Naive thymus-derived CD4-positive, alpha-beta T cell (primary cell): ENCODE measurements at regions of chr7 and their contacts with region 1.

Region 1: GRCh38 chr7:127347567-127348246 is 44.8 kb downstream of the ZNF800 start:
- DNase-seq: peak; percentile 55 to 80 (median 73)
- ATAC-seq: peak; percentile 99
- H3K4me3 ChIP-seq: peak overlapping the region; percentile 46
- H3K4me3 Mint-ChIP-seq: peak overlapping the region; percentile 52 to 80 (median 65)
- H3K27ac ChIP-seq: no peak overlapping the region
- H3K27ac Mint-ChIP-seq: peak overlapping the region in 2 of 9 donors; percentile 48 to 68
- H3K4me1 ChIP-seq: peaks cover 3% of the 10 kb centered on the region in 2 donors
- H3K4me1 Mint-ChIP-seq: peaks cover 6 to 33% (median 22%) of the 10 kb centered on the region in 7 donors
- H3K27me3 ChIP-seq: no peaks in the 10 kb centered on the region
- H3K27me3 Mint-ChIP-seq: peaks cover 0 to 28% (median 0%) of the 10 kb centered on the region in 5 donors

Region 2: GRCh38 chr7:127253281-127254162 is 94.2 kb before region 1 on chr7:
- CTCF ChIA-PET with region 1: no interaction called
- POLR2A ChIA-PET with region 1: no interaction called
- intact Hi-C with region 1: loop called in 1 of 2 experiments (anchors 5 kb)
- DNase-seq: peak; percentile 13 to 64 (median 41)
- ATAC-seq: peak; percentile 84
- H3K4me3 ChIP-seq: peak overlapping the region; percentile 76
- H3K4me3 Mint-ChIP-seq: peak overlapping the region; percentile 76 to 93 (median 88)
- H3K27ac ChIP-seq: no peak overlapping the region
- H3K27ac Mint-ChIP-seq: no peak overlapping the region
- H3K4me1 ChIP-seq: peaks cover 12 to 16% of the 10 kb centered on the region in 2 donors
- H3K4me1 Mint-ChIP-seq: peaks cover 12 to 32% (median 25%) of the 10 kb centered on the region in 7 donors
- H3K27me3 ChIP-seq: peaks cover 3 to 27% of the 10 kb centered on the region in 2 donors
- H3K27me3 Mint-ChIP-seq: peaks cover 65 to 83% (median 73%) of the 10 kb centered on the region in 5 donors

Region 3: DNA sequence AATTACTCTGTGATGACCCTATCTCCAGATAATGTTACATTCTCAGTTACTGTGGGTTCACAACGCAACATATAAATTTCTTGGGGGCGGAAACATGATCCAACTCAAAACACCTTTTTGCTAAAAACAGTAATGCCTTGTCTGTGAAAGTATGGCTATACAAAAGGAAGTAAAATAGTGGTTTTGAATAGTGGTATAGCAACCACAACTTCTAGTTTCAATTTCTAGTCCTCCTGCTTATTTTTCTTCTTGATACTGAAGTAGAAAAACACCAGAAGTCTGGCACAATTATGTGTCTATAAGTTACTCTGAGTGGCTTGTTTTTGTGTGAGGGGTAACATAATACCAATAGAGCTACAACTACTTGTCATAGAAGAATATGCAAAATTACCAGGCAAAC is 66.3 kb after region 1 on chr7:
- CTCF ChIA-PET with region 1: interaction called, 4 read pairs
- POLR2A ChIA-PET with region 1: interaction called, 3 read pairs
- intact Hi-C with region 1: loop called in 1 of 2 experiments (anchors 2 kb)
- DNase-seq: peak in 7 of 9 donors; percentile 37 to 76 (median 67)
- ATAC-seq: peak; percentile 88
- H3K4me3 ChIP-seq: peak overlapping the region; percentile 5
- H3K4me3 Mint-ChIP-seq: peak overlapping the region; percentile 57 to 87 (median 74)
- H3K27ac ChIP-seq: peak overlapping the region; percentile 61
- H3K27ac Mint-ChIP-seq: peak overlapping the region; percentile 88 to 99 (median 95)
- H3K4me1 ChIP-seq: peaks cover 20 to 45% of the 10 kb centered on the region in 2 donors
- H3K4me1 Mint-ChIP-seq: peaks cover 45 to 74% (median 68%) of the 10 kb centered on the region in 7 donors
- H3K27me3 ChIP-seq: no peaks in the 10 kb centered on the region
- H3K27me3 Mint-ChIP-seq: peaks cover 0 to 14% (median 0%) of the 10 kb centered on the region in 5 donors

Region 4: DNA sequence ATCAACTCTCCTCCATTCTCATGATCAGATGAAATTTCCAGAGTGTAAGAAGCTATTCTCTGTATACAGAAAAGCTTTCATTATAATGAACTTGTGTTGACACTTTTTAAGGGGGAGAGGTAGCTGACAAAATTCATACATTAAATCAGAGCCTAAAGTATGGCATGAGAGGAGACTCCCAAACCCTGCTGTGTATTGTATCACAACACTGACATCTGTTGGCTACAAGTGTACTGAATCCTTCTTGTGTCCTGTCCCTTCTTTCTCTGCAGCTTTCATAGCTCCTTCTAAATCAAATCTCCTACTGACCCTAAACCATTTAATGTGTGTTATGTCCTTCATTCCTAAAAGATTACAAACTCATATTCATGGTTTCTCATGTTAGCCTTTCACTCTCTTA is 166.8 kb after region 1 on chr7:
- CTCF ChIA-PET with region 1: interaction called, 17 read pairs
- POLR2A ChIA-PET with region 1: no interaction called
- intact Hi-C with region 1: loop called (anchors 1 to 2 kb)
- DNase-seq: peak in 7 of 9 donors; percentile 14 to 59 (median 41)
- ATAC-seq: peak; percentile 75
- H3K4me3 ChIP-seq: no peak overlapping the region
- H3K4me3 Mint-ChIP-seq: no peak overlapping the region
- H3K27ac ChIP-seq: no peak overlapping the region
- H3K27ac Mint-ChIP-seq: no peak overlapping the region
- H3K4me1 ChIP-seq: no peaks in the 10 kb centered on the region
- H3K4me1 Mint-ChIP-seq: no peaks in the 10 kb centered on the region
- H3K27me3 ChIP-seq: peaks cover 0 to 3% of the 10 kb centered on the region in 2 donors
- H3K27me3 Mint-ChIP-seq: peaks cover 13 to 43% (median 29%) of the 10 kb centered on the region in 5 donors

Region 5: DNA sequence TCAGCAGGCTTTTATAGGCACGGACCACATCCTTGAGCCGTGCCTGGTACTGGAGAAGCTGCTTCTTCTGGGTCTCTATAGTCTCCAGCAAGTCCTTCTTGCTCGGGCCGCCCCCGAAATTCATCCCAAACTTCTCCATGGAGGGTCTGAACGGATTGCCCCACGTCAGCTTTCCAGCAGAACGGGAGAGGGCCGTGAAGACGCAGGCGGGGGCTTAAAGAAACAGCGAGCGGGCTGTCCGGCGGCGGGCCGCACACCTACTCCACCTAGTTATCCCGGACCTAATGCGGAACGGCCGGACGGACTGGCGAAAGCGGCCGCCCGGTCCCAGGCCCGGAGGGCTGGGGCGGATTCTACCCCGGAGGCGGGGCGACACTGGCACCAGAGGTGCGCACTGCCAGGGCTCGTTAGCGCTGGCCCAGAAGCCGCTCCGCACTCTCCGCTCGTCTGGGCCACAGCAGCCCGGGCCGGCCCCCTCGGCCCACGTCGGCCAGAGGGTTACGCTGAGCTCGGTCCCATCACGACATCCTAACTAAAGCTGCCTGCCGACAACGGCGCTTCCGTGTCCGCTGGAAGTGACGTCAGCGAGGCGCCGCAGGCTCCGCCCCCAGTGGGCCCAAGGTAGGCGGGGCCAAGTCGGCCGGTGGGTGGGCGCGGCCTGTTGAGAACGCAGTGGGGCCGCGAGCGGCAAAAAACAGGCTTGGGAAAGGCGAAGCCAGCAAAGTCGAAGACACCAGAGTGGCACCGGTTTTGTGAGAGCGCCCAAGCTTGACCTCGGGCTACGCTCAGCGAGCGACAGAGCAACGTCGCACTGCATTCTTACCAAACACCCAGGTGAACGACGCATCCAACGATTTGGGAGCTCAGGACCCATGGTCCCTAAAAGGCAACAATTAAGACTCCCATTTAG is 237.6 kb after region 1 on chr7 and contains the start of gene GCC1:
- CTCF ChIA-PET with region 1: no interaction called
- POLR2A ChIA-PET with region 1: no interaction called
- intact Hi-C with region 1: loop called (anchors 5 kb)
- DNase-seq: peak; percentile 87 to 98 (median 93)
- ATAC-seq: peak; percentile 87
- H3K4me3 ChIP-seq: peak within 1 kb of the TSS; percentile 87
- H3K4me3 Mint-ChIP-seq: peak within 1 kb of the TSS; percentile 86 to 98 (median 92)
- H3K27ac ChIP-seq: peak within 1 kb of the TSS; percentile 88
- H3K27ac Mint-ChIP-seq: peak within 1 kb of the TSS; percentile 77 to 97 (median 94)
- H3K4me1 ChIP-seq: peaks cover 47 to 55% of the 10 kb centered on the region in 2 donors
- H3K4me1 Mint-ChIP-seq: peaks cover 55 to 88% (median 78%) of the 10 kb centered on the region in 7 donors
- H3K27me3 ChIP-seq: no peaks in the 10 kb centered on the region
- H3K27me3 Mint-ChIP-seq: no peaks in the 10 kb centered on the region
- total RNA-seq, gene GCC1: 19.6 to 31.3 (median 23.7) TPM